ENCODE measurements at regions of chr7 and their contacts with region 1.

Region 1: GRCh38 chr7:2209146-2209960 is 23.4 kb downstream of the MAD1L1 start:
- DNase-seq: peak; percentile 32
- ATAC-seq: peak; percentile 94
- H3K4me3 ChIP-seq: no peak overlapping the region
- H3K27ac ChIP-seq: peak overlapping the region; percentile 45
- H3K4me1 ChIP-seq: peaks cover 11% of the 10 kb centered on the region
- H3K27me3 ChIP-seq: no peaks in the 10 kb centered on the region
- CTCF ChIP-seq: peak; percentile 74 to 88 (median 88)
- EP300 ChIP-seq: peak in 1 of 2 experiments; percentile 53; a peak in 1 of 4 replicates
- POLR2A ChIP-seq: 0 out of 2 replicates have a peak, but pooled peaks have one; percentile 10
- RAD21 ChIP-seq: peak; percentile 84

Region 2: GRCh38 chr7:1579481-1580421 is 629.6 kb before region 1 on chr7:
- CTCF ChIA-PET with region 1: interaction called, 12 read pairs
- POLR2A ChIA-PET with region 1: no interaction called
- RAD21 ChIA-PET with region 1: interaction called, 5 read pairs
- SMC1A ChIA-PET with region 1: no interaction called
- in situ Hi-C with region 1: loop called (anchors 5 kb)
- intact Hi-C with region 1: loop called (anchors 2 kb)
- DNase-seq: no peak
- ATAC-seq: peak; percentile 100
- H3K4me3 ChIP-seq: no peak overlapping the region
- H3K27ac ChIP-seq: no peak overlapping the region
- H3K4me1 ChIP-seq: no peaks in the 10 kb centered on the region
- H3K27me3 ChIP-seq: no peaks in the 10 kb centered on the region
- CTCF ChIP-seq: peak; percentile 83 to 91 (median 89)
- EP300 ChIP-seq: no peak
- POLR2A ChIP-seq: no peak
- RAD21 ChIP-seq: peak; percentile 92

Region 3: GRCh38 chr7:1812509-1813393 is 396.6 kb before region 1 on chr7:
- CTCF ChIA-PET with region 1: interaction called, 3 read pairs
- POLR2A ChIA-PET with region 1: no interaction called
- RAD21 ChIA-PET with region 1: interaction called, 3 read pairs
- SMC1A ChIA-PET with region 1: no interaction called
- in situ Hi-C with region 1: no loop called
- intact Hi-C with region 1: loop called (anchors 10 kb)
- DNase-seq: no peak
- ATAC-seq: peak; percentile 62
- H3K4me3 ChIP-seq: no peak overlapping the region
- H3K27ac ChIP-seq: no peak overlapping the region
- H3K4me1 ChIP-seq: no peaks in the 10 kb centered on the region
- H3K27me3 ChIP-seq: no peaks in the 10 kb centered on the region
- CTCF ChIP-seq: peak; percentile 13 to 35 (median 21); a peak in 2 of 6 replicates
- EP300 ChIP-seq: no peak
- POLR2A ChIP-seq: no peak
- RAD21 ChIP-seq: no peak

Region 4: DNA sequence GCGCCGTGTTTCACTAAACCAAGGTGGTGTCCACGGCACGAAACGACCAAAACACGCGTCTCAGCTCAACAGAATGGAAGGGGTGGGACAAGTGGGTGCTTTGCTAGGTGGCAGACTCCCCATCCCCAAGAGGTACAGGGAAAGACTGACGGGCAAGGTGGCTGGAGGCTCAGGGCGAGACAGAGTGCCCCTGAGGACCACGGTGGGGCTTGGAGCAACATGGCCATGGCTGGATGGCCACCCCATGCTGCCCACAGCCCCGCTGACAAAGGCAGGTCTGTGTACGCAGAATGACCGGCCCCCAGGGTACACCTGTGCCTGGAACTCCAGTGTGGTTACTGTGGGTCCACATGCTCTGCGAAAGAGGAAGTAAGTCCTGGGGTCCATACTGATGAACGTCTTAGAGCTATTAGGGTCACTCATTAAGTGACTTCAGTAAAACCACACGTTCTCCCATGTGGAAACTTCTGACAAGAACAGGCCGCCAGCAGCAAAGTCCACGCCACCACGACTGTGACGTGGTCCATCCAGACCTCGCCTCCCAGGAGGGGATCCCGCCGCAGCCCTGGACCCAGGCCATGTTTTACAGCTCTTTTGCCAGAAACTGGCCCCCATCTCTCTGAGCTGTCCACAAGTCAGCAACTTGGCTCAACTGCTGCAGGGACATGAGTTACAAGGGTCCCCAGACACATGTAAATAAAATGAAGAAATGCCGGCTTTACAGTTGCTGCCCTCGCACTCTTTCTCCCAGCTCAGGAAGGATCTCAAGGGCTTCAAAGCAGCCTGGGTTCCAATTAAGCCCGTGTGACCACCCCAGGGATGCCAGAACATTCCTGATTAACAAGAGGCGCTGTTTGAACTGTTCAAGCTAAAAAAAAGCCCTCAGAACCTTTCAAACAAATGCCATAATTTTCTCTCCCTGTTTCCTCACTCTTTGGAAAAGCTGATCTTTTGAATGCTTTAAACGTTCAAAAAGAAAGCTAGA is 43.5 kb before region 1 on chr7:
- CTCF ChIA-PET with region 1: no interaction called
- POLR2A ChIA-PET with region 1: interaction called, 3 read pairs
- RAD21 ChIA-PET with region 1: interaction called, 10 read pairs
- SMC1A ChIA-PET with region 1: interaction called, 6 read pairs
- in situ Hi-C with region 1: no loop called
- intact Hi-C with region 1: no loop called
- DNase-seq: peak; percentile 79
- ATAC-seq: peak; percentile 95
- H3K4me3 ChIP-seq: no peak overlapping the region; the same call in 1 of the 2 replicates
- H3K27ac ChIP-seq: peak overlapping the region; percentile 74
- H3K4me1 ChIP-seq: peaks cover 22% of the 10 kb centered on the region
- H3K27me3 ChIP-seq: no peaks in the 10 kb centered on the region
- CTCF ChIP-seq: no peak
- EP300 ChIP-seq: peak; percentile 93 to 97
- POLR2A ChIP-seq: no peak
- RAD21 ChIP-seq: no peak

Region 5: GRCh38 chr7:2195400-2196246 is 13.7 kb before region 1 on chr7:
- CTCF ChIA-PET with region 1: interaction called, 24 read pairs
- POLR2A ChIA-PET with region 1: no interaction called
- RAD21 ChIA-PET with region 1: interaction called, 4 read pairs
- SMC1A ChIA-PET with region 1: interaction called, 6 read pairs
- in situ Hi-C with region 1: no loop called
- intact Hi-C with region 1: no loop called
- DNase-seq: no peak
- ATAC-seq: no peak
- H3K4me3 ChIP-seq: no peak overlapping the region
- H3K27ac ChIP-seq: no peak overlapping the region
- H3K4me1 ChIP-seq: no peaks in the 10 kb centered on the region
- H3K27me3 ChIP-seq: no peaks in the 10 kb centered on the region
- CTCF ChIP-seq: no peak
- EP300 ChIP-seq: no peak
- POLR2A ChIP-seq: no peak
- RAD21 ChIP-seq: no peak

Measured in GM12878 (cell line).